ENCODE measurements at regions of chr4 and their contacts with region 1.

Region 1: GRCh38 chr4:40976343-40976742 is 226.6 kb downstream of the NSUN7 start:
- DNase-seq: peak; percentile 62
- H3K4me3 ChIP-seq: no peak overlapping the region
- H3K27ac ChIP-seq: no peak overlapping the region
- H3K4me1 ChIP-seq: no peaks in the 10 kb centered on the region
- H3K27me3 ChIP-seq: no peaks in the 10 kb centered on the region
- CTCF ChIP-seq: peak; percentile 77

Region 2: GRCh38 chr4:41661442-41662076 is 685.2 kb after region 1 on chr4:
- CTCF ChIA-PET with region 1: interaction called, 3 read pairs
- POLR2A ChIA-PET with region 1: no interaction called
- intact Hi-C with region 1: loop called (anchors 10 kb)
- DNase-seq: peak; percentile 63
- H3K4me3 ChIP-seq: no peak overlapping the region
- H3K27ac ChIP-seq: no peak overlapping the region
- H3K4me1 ChIP-seq: no peaks in the 10 kb centered on the region
- H3K27me3 ChIP-seq: peaks cover 23% of the 10 kb centered on the region
- CTCF ChIP-seq: peak; percentile 90

Measured in A673 (cell line).